WTC11 (cell line): ENCODE measurements at regions of chr20 and their contacts with region 1.

Region 1: GRCh38 chr20:728248-728944 is 39.9 kb downstream of the SLC52A3 start:
- DNase-seq: peak; percentile 88
- ATAC-seq: peak; percentile 89
- H3K4me3 Mint-ChIP-seq: peak overlapping the region; percentile 64
- H3K27ac Mint-ChIP-seq: no peak overlapping the region
- H3K4me1 Mint-ChIP-seq: peaks cover 6% of the 10 kb centered on the region; the same call in 1 of the 2 replicates
- H3K27me3 Mint-ChIP-seq: peaks cover 39% of the 10 kb centered on the region
- CTCF ChIP-seq: peak; percentile 34; the same call in 1 of the 2 replicates

Region 2: GRCh38 chr20:675453-676314 is 52.7 kb before region 1 on chr20 and contains the start of gene SCRT2:
- CTCF ChIA-PET with region 1: interaction called, 17 read pairs
- POLR2A ChIA-PET with region 1: no interaction called
- DNase-seq: peak; percentile 80
- ATAC-seq: peak; percentile 75
- H3K4me3 Mint-ChIP-seq: peak within 1 kb of the TSS; percentile 83
- H3K27ac Mint-ChIP-seq: no peak within 1 kb of the TSS
- H3K4me1 Mint-ChIP-seq: peaks cover 25% of the 10 kb centered on the region
- H3K27me3 Mint-ChIP-seq: peaks cover 57% of the 10 kb centered on the region
- CTCF ChIP-seq: no peak
- total RNA-seq, gene SCRT2: 0.14 to 0.20 TPM (median 0.16 TPM) in 3 replicates

Region 3: DNA sequence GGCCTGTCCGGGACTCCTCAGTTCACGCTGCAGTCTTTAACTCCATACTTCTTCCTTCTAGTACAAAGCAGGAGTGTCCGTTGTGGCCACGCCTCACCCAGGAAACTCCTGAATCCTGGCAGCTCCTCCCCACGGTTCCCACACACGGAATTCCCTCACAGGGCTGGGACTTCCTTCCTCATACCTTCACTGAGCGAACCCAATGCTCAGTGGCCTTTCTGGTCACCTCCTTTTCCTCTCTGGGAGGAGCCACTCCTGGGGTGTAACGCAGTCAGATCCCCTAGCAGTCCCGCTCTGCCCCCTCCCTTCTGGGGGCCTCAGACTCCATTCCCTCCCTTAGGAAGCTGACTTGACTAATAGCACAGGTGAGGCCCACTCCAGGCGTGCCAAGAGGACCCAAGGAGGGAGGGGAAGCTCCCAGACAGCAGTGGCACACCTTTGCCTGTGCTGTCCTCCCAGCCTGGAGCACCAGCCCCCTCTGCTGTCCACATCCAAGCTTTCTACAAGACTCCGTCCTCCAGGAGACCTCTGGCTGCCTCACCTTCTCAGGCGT is 40.1 kb after region 1 on chr20 and contains the start of gene SLC52A3:
- CTCF ChIA-PET with region 1: interaction called, 13 read pairs
- POLR2A ChIA-PET with region 1: no interaction called
- DNase-seq: peak; percentile 73
- ATAC-seq: peak; percentile 96
- H3K4me3 Mint-ChIP-seq: no peak within 1 kb of the TSS
- H3K27ac Mint-ChIP-seq: no peak within 1 kb of the TSS
- H3K4me1 Mint-ChIP-seq: peaks cover 14% of the 10 kb centered on the region
- H3K27me3 Mint-ChIP-seq: no peaks in the 10 kb centered on the region
- CTCF ChIP-seq: no peak
- total RNA-seq, gene SLC52A3: 6.9 to 7.7 TPM (median 7.3 TPM) in 3 replicates